ENCODE measurements at regions of chr6 and their contacts with region 1.

Region 1: DNA sequence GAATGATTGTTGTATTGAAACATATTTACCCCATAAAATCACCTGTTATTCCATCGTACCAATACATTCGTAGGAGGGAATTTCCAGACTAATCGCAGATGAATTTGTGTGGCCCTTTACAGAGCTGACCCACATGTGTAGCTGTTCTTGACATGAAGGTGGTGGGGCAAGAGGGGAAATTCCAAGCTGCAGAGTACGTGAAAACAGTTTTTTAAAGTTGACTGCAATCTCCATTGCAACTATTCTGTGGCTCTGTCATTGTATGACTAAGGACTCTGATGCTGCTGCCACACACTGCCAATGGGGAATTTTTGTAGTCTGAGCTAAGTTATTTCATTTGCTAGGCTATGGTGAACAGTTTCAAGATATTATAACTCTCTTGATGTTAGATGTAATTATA is 46.4 kb upstream of the ADTRP start:
- DNase-seq: no peak
- ATAC-seq: no peak
- H3K4me3 ChIP-seq: no peak overlapping the region
- H3K27ac ChIP-seq: no peak overlapping the region
- H3K4me1 ChIP-seq: peaks cover 0 to 5% (median 0%) of the 10 kb centered on the region in 12 donors
- H3K27me3 ChIP-seq: no peaks in the 10 kb centered on the region
- CTCF ChIP-seq: no peak
- POLR2A ChIP-seq: no peak

Region 2: GRCh38 chr6:12011276-12012076 is 186.5 kb after region 1 on chr6:
- intact Hi-C with region 1: loop called in 1 of 10 experiments (anchors 10 kb)
- DNase-seq: peak; percentile 98 to 99 (median 99)
- ATAC-seq: peak; percentile 92 to 95 (median 95)
- H3K4me3 ChIP-seq: peak overlapping the region; percentile 61 to 98 (median 78)
- H3K27ac ChIP-seq: peak overlapping the region; percentile 91 to 100 (median 96)
- H3K4me1 ChIP-seq: peaks cover 0 to 39% (median 19%) of the 10 kb centered on the region in 12 donors
- H3K27me3 ChIP-seq: no peaks in the 10 kb centered on the region
- CTCF ChIP-seq: no peak
- POLR2A ChIP-seq: no peak